ENCODE measurements at regions of chr9 and their contacts with region 1.

Region 1: GRCh38 chr9:127199001-127199791 is 65.4 kb upstream of the GARNL3 start:
- DNase-seq: peak; percentile 84
- ATAC-seq: peak; percentile 65

Region 2: DNA sequence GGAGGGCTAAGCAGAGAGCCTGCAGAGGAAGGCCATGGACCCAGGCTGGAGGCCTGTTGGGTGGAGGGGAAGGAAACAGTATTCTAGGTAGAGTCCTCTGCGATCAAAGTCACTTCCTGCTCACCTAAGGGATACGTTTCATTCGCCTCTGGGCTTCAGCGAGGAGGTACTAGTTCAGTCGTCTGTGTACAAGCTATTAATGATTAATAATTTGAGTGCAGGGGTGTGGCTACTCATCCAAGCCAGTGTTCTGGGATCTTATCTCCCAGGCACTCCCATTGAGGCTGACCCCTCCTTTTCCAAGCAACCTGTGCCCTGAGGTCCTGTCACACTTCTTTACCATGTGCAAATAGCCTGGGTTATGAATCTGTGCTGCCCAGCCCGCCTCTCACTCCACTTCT is 259.4 kb before region 1 on chr9:
- intact Hi-C with region 1: loop called (anchors 5 kb)
- DNase-seq: no peak
- ATAC-seq: peak; percentile 4

Region 3: DNA sequence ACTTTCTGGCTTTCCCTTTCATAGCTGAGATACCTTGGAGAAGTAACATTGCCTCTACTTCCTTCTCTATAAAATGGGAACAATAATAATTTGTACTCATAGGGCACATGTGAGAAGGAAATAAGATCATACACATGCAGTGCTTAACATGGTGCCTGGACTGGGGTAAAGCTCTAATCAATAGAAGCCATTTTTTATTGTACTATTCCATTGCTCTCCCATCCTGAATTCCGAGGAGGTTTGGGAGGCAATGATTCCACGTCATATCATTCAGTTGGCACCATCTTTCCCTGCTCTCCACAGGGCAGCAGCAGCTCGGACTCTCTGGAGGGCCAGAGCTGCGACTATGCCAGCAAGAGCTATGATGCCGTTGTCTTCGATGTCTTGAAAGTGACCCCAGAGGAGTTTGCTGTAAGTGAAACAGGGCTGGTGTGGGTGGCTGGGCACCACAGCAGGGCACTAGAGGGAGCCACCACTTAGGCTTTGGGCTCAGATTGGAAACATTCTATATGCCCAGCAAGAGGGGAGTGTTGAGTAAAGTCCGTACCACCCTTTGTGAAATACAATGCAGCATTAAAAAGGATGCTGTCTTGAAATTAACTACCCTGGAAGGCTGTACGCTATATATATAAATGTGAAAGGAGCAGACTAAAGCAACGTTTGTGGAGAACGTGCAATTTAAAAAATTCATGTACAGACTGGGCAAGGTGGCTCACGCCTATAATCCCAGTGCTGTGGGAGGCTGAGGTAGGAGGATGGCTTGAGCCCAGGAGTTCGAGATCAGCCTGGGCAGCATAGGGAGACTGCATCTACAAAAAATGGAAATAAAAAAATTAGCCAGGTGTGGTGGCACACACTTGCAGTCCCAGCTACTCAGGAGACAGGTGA is 233.4 kb before region 1 on chr9:
- intact Hi-C with region 1: loop called (anchors 2 kb)
- DNase-seq: peak; percentile 66
- ATAC-seq: peak; percentile 83

Region 4: DNA sequence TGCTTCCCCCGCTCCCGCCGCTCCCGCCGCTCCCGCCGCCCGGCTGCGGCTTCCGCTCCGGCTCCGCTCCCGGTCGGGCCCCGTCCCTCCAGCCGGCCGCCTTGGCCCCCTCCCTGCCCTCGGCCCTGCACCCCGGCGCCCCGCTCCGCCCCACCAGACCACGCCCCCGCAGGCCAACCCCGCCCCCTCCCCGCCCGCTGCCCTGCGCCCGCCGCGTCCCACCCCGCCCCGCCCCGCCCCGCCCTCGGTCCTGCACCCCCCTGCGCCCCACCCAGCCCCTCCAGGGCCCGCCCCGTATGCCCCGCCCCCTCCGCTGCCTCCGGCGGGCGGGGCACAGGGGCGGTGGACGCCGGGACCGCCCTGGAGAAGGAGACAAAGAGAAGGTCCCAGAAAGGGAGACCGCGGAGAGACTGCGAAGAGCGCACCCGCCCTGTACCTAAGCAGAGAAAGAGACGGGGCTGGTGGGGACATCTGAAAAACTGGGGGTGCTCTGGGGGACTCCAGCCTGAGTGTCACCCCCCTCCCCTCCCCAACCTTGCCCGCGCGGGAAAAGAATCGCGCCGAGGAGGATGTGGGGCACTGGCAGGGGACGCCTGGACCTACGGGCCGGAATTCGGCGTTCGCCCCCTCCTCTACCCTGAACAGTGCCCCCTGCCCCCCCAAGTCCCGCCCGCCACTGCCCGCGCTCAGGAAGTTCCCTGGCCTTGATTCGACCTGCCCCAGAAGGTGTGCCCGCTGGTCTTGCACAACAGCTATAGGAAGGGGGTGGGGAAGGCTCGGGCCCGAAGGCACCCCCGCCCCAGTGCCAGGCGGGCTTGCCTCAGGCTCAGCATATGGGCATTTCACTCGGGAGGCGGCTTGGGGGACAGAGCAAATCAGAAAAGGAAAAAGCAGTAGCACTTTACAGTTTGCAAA is 370.0 kb after region 1 on chr9:
- intact Hi-C with region 1: no loop called
- DNase-seq: peak; percentile 87
- ATAC-seq: peak; percentile 90

Measured in left ventricle myocardium superior (tissue), 1 donor.